ENCODE measurements at regions of chr2 and their contacts with region 1.

Region 1: DNA sequence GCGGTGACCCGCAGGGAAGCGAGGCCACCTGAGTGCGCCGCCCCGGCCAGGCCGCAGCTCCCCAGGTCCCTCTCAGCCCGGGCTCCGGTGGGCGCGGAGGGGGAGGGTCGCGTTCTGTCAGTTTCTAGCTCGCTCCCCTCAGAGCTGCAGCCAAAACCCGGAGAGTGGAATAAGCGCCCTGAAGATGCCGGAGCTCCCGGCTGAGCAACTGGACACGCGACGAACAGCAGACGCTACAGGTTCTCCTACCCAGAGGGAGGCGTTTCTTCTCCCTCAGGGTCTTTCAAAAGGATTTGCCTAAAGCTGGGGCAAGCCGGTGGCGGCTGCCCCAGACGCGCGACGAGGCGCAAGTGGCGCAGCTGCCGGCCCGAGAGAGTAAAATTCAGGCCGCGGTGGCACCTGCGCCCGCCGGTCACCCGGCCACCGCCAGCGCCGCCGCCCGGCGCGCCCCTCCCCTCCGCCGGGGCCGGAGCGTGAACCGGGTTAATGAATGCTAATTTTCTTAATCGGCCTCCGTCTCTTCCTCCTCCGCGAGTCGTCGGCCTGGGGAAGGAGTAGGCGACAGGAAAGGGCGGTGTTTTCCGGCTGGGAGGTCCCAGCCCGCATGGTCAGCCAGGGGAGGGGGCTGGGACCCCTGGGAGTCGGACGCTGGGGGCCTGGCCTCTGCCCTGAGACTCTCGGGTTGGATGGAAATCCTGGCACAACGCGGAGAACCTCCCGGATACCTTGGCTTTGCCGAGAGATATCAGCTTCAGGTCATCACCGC is 845 bp upstream of the CDC42EP3 start:
- DNase-seq: peak; percentile 90
- H3K4me3 ChIP-seq: peak overlapping the region; percentile 88 to 96 (median 93)
- H3K27ac ChIP-seq: peak overlapping the region; percentile 65
- H3K4me1 ChIP-seq: peaks cover 44% of the 10 kb centered on the region
- H3K27me3 ChIP-seq: no peaks in the 10 kb centered on the region
- CTCF ChIP-seq: no peak

Region 2: GRCh38 chr2:37537316-37537715 is 135.0 kb before region 1 on chr2:
- CTCF ChIA-PET with region 1: no interaction called
- dilution Hi-C with region 1: no loop called
- in situ Hi-C with region 1: no loop called
- intact Hi-C with region 1: loop called (anchors 1 kb)
- DNase-seq: no peak
- H3K4me3 ChIP-seq: no peak overlapping the region
- H3K27ac ChIP-seq: no peak overlapping the region
- H3K4me1 ChIP-seq: no peaks in the 10 kb centered on the region
- H3K27me3 ChIP-seq: no peaks in the 10 kb centered on the region
- CTCF ChIP-seq: no peak

Region 3: GRCh38 chr2:37711308-37711731 is 39.0 kb after region 1 on chr2:
- CTCF ChIA-PET with region 1: no interaction called
- dilution Hi-C with region 1: no loop called
- in situ Hi-C with region 1: no loop called
- intact Hi-C with region 1: loop called (anchors 1 kb)
- DNase-seq: peak; percentile 73
- H3K4me3 ChIP-seq: peak overlapping the region in 1 of 3 experiments; percentile 9
- H3K27ac ChIP-seq: peak overlapping the region; percentile 52
- H3K4me1 ChIP-seq: peaks cover 24% of the 10 kb centered on the region
- H3K27me3 ChIP-seq: no peaks in the 10 kb centered on the region
- CTCF ChIP-seq: no peak

Region 4: GRCh38 chr2:37798315-37799005 is 126.2 kb after region 1 on chr2:
- CTCF ChIA-PET with region 1: no interaction called
- dilution Hi-C with region 1: no loop called
- in situ Hi-C with region 1: no loop called
- intact Hi-C with region 1: no loop called
- DNase-seq: no peak
- H3K4me3 ChIP-seq: no peak overlapping the region
- H3K27ac ChIP-seq: no peak overlapping the region
- H3K4me1 ChIP-seq: peaks cover 43% of the 10 kb centered on the region
- H3K27me3 ChIP-seq: no peaks in the 10 kb centered on the region
- CTCF ChIP-seq: no peak

Region 5: GRCh38 chr2:37809525-37809924 is 137.2 kb after region 1 on chr2:
- CTCF ChIA-PET with region 1: no interaction called
- dilution Hi-C with region 1: no loop called
- in situ Hi-C with region 1: loop called in 1 of 2 experiments (anchors 5 kb)
- intact Hi-C with region 1: loop called (anchors 1 kb)
- DNase-seq: peak; percentile 42
- H3K4me3 ChIP-seq: no peak overlapping the region
- H3K27ac ChIP-seq: no peak overlapping the region
- H3K4me1 ChIP-seq: no peaks in the 10 kb centered on the region
- H3K27me3 ChIP-seq: no peaks in the 10 kb centered on the region
- CTCF ChIP-seq: peak; percentile 63 to 65

Region 6: GRCh38 chr2:37871456-37872191 is 199.3 kb after region 1 on chr2:
- CTCF ChIA-PET with region 1: no interaction called
- dilution Hi-C with region 1: no loop called
- in situ Hi-C with region 1: no loop called
- intact Hi-C with region 1: loop called (anchors 1 kb)
- DNase-seq: peak; percentile 87
- H3K4me3 ChIP-seq: no peak overlapping the region
- H3K27ac ChIP-seq: peak overlapping the region; percentile 21
- H3K4me1 ChIP-seq: peaks cover 33% of the 10 kb centered on the region
- H3K27me3 ChIP-seq: no peaks in the 10 kb centered on the region
- CTCF ChIP-seq: no peak

Measured in mammary epithelial cell (primary cell).